Activated T-helper 2 cell treated with anti-CD3 and anti-CD28 coated beads, Interferon-gamma antibody, Interleukin-2, Interleukin-4, amounts not matched to agents 10 μg/mL and 5 μg/mL and 100 μg/mL, durations not matched to agents 14 hours and 24 hours and 36 hours (primary cell): ENCODE measurements at regions of chrX and their contacts with region 1.

Region 1: DNA sequence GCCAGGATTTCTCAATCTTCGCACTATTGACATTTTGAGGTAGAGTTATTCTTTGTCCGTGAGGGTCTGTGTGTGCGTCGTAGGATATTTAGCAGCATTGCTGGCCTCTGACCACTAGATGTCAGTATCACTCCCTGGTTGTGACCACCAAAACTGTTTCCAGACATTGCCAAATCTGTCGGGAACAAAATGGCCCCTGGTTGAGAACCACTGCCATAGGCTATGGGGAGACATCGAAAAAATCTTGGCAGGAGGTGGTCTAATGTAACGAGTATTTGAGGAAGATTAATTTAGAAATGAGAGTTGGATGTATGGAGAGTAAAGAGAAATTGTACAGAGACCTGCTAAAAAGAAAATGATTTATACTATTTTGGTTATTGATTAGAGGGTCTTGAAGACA is 108.4 kb downstream of the DOCK11 start:
- DNase-seq: no peak
- H3K4me3 Mint-ChIP-seq: no peak overlapping the region
- H3K27ac Mint-ChIP-seq: no peak overlapping the region
- H3K4me1 Mint-ChIP-seq: peaks cover 3% of the 10 kb centered on the region
- H3K27me3 Mint-ChIP-seq: no peaks in the 10 kb centered on the region

Region 2: DNA sequence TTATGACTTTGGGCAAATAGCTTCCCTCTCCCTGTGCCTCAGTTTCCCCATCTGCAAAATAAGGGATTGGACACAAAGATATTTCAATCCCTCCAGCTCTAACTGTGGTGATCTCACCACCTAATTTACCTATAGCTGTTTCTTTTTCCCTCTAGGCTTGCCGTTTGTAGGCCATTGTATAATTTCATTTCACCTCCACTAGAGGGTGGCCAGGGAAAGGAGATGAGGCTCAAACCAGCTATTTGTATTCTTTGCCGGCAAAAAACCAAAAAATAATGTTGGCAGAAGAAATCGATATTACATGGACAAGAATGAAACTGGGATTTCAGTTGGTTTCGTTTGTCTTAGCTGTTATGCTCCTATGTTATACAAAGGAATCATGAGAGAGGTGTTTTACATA is 144.5 kb before region 1 on chrX:
- intact Hi-C with region 1: loop called (anchors 2 kb)
- DNase-seq: no peak
- H3K4me3 Mint-ChIP-seq: no peak overlapping the region
- H3K27ac Mint-ChIP-seq: no peak overlapping the region
- H3K4me1 Mint-ChIP-seq: no peaks in the 10 kb centered on the region
- H3K27me3 Mint-ChIP-seq: no peaks in the 10 kb centered on the region

Region 3: GRCh38 chrX:118807151-118808017 is 203.4 kb after region 1 on chrX:
- intact Hi-C with region 1: loop called (anchors 1 kb)
- DNase-seq: no peak
- H3K4me3 Mint-ChIP-seq: no peak overlapping the region
- H3K27ac Mint-ChIP-seq: no peak overlapping the region
- H3K4me1 Mint-ChIP-seq: no peaks in the 10 kb centered on the region
- H3K27me3 Mint-ChIP-seq: peaks cover 6% of the 10 kb centered on the region